ENCODE measurements at regions of chr4 and their contacts with region 1.

Region 1: DNA sequence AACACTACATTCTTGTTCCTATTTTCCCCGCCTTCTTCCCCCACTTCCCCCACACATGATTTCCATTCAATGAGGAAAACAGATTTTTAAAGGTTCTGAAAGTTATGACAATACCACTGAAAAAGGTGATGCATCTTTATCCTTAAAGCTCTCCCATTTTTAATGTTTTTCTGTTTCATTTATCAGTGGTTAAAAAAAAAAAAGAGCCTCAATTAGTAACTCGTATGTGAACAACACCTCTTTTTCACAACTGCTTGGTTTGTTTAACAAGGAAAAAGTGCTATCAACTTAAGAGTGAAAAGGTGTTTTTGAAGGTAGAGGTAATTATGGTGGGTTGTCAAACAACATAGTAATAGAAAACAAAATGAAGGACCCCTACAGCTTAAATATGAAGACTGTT is 8.2 kb upstream of the CAMK2D start:
- DNase-seq: no peak
- ATAC-seq: no peak
- H3K4me3 ChIP-seq: no peak overlapping the region
- H3K4me3 Mint-ChIP-seq: no peak overlapping the region
- H3K27ac ChIP-seq: no peak overlapping the region
- H3K27ac Mint-ChIP-seq: no peak overlapping the region
- H3K4me1 ChIP-seq: peaks cover 0 to 3% of the 10 kb centered on the region in 2 donors
- H3K4me1 Mint-ChIP-seq: peaks cover 2 to 32% (median 14%) of the 10 kb centered on the region in 7 donors
- H3K27me3 ChIP-seq: no peaks in the 10 kb centered on the region
- H3K27me3 Mint-ChIP-seq: no peaks in the 10 kb centered on the region

Region 2: GRCh38 chr4:113732967-113733527 is 36.7 kb before region 1 on chr4:
- CTCF ChIA-PET with region 1: no interaction called
- POLR2A ChIA-PET with region 1: no interaction called
- intact Hi-C with region 1: loop called in 1 of 2 experiments (anchors 1 kb)
- DNase-seq: no peak
- ATAC-seq: no peak
- H3K4me3 ChIP-seq: no peak overlapping the region
- H3K4me3 Mint-ChIP-seq: peak overlapping the region in 1 of 10 donors; percentile 12
- H3K27ac ChIP-seq: no peak overlapping the region
- H3K27ac Mint-ChIP-seq: peak overlapping the region in 1 of 9 donors; percentile 58
- H3K4me1 ChIP-seq: peaks cover 0 to 3% of the 10 kb centered on the region in 2 donors
- H3K4me1 Mint-ChIP-seq: peaks cover 25 to 83% (median 55%) of the 10 kb centered on the region in 7 donors
- H3K27me3 ChIP-seq: no peaks in the 10 kb centered on the region
- H3K27me3 Mint-ChIP-seq: no peaks in the 10 kb centered on the region

Measured in naive thymus-derived CD4-positive, alpha-beta T cell (primary cell).